ENCODE measurements at regions of chr6 and their contacts with region 1.

Region 1: DNA sequence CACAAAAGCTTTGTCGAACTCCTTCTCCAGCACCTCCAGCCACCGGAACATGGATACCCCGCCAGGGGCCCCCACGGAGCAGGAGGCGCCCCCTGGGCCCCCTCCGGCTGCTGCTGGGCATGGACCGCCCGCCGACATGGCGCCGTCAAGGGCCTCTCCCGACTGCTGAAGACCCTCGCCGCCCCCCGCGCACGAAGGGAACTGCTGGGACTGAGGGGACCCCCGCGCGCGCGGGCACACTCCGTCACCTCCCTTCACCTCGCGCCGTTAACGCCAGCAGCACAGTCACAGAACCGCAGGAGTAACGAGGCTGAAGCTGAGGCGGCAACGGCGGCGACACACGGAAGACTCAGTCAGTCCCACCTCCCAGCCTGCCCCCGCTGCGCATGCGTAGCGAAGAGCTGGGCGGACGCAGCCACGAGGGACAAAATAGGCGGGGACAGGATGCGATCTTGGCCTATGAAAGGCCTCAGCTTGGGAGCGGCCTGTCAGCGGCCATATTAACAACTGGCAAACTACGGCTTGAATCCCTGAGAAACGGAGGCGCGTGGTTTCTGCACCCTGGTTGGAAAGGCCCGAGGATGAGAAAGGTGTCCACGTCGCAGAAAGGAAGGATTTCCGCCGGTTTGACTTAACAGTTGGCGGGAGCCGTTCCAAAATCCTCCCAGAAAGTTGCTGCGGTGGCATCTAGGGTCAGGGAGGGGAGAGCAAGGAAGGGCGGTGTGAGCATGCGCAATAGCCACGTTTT is at the start of gene GOPC:
- DNase-seq: peak; percentile 98
- H3K4me3 Mint-ChIP-seq: peak within 1 kb of the TSS; percentile 99
- H3K27ac Mint-ChIP-seq: peak within 1 kb of the TSS; percentile 100
- H3K4me1 Mint-ChIP-seq: peaks cover 31% of the 10 kb centered on the region
- H3K27me3 Mint-ChIP-seq: peaks cover 3% of the 10 kb centered on the region
- total RNA-seq, gene GOPC: 22.2 TPM in 2 replicates

Region 2: DNA sequence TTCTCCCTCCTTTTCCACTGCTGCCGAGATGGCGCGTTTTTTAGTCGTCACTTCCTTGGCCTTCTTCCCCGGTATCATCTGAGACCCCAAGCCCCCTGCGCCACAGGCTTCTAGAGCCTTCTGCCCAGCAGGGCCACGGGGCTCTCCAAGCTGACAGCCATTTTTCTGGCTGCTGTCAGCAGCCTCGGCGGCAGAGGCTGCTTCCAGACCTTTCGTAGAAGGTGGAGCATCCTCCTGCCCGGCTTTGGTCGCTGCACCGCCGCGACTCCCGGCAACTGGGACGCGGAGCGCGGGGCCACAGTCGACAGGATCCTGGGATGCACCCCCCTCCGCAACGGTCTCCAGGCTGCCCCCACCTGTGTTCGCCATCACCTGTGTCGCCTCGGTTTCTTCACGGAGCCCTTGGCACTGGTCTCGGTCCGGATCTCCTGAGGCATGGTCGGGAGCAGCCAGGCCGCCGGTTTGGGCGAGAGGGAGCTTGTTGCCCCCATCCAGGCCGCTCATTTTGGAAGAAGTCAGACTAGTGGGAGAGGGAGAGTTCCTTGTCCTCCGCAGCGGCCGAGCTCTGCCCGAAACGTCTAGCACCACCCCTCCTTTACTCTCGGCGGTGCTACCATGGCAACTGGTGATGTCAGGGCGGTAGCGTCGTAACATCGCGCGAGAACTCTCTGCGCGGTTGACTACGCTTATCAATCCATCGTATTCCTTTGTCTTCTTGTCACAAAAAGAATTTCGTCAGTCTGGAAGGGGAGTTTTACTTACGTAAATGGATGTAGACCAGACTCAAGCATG is 1348.6 kb before region 1 on chr6 and contains the start of gene TSPYL4:
- intact Hi-C with region 1: loop called (anchors 10 kb)
- DNase-seq: peak; percentile 98
- H3K4me3 Mint-ChIP-seq: no peak within 1 kb of the TSS
- H3K27ac Mint-ChIP-seq: no peak within 1 kb of the TSS
- H3K4me1 Mint-ChIP-seq: peaks cover 25% of the 10 kb centered on the region
- H3K27me3 Mint-ChIP-seq: no peaks in the 10 kb centered on the region
- total RNA-seq, gene TSPYL4: 22.1 and 22.2 TPM in 2 replicates

Region 3: DNA sequence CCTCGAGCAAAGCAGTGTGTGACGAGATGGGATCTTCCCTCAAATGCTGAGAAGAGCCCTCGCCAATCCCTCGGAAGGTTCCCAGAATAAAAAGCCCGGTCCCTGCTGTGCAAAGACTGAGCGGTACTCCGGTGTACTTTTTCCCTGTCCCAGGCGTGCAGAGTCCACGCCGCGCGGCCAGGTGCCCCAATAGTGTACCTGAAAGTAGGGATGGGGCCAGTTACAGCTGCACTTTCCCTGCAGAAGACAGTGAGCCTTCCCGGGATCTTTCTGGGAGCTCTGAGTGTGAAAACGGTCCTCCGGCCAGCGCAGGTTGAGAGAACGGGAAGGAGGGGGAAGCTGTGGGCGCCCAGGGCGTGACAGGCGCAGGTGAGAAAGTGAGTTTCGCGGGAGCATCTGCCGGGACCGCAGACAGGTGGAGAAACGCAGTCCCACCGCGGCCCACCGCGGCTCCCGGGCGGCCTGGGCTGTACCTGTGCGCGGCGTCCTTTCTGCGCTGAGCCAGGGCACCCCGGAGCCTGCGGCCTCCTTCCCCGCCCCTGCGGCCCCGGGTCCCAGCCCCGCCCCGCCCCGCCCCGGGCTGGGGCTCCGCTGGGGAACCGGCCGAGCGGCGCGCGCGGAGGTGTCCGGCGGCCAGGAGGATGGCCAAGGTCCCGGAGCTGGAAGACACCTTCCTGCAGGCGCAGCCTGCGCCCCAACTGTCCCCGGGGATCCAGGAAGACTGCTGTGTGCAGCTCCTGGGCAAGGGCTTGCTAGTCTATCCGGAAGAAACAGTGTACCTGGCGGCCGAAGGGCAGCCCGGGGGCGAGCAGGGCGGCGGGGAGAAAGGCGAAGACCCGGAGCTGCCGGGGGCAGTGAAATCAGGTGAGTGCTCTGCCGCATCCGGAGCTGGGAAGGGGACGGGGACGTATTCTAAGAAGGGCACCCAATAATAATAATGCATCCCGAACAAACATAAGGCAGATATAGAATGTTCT is 725.4 kb before region 1 on chr6 and contains the start of gene RFX6:
- intact Hi-C with region 1: no loop called
- DNase-seq: no peak
- H3K4me3 Mint-ChIP-seq: peak within 1 kb of the TSS; percentile 69
- H3K27ac Mint-ChIP-seq: no peak within 1 kb of the TSS
- H3K4me1 Mint-ChIP-seq: peaks cover 2% of the 10 kb centered on the region
- H3K27me3 Mint-ChIP-seq: peaks cover 34% of the 10 kb centered on the region
- total RNA-seq, gene RFX6: not detected in 2 replicates

Region 4: GRCh38 chr6:116971959-116972358 is 630.4 kb before region 1 on chr6:
- intact Hi-C with region 1: loop called (anchors 2 kb)
- DNase-seq: peak; percentile 65
- H3K4me3 Mint-ChIP-seq: no peak overlapping the region
- H3K27ac Mint-ChIP-seq: no peak overlapping the region
- H3K4me1 Mint-ChIP-seq: no peaks in the 10 kb centered on the region
- H3K27me3 Mint-ChIP-seq: peaks cover 4% of the 10 kb centered on the region

Region 5: DNA sequence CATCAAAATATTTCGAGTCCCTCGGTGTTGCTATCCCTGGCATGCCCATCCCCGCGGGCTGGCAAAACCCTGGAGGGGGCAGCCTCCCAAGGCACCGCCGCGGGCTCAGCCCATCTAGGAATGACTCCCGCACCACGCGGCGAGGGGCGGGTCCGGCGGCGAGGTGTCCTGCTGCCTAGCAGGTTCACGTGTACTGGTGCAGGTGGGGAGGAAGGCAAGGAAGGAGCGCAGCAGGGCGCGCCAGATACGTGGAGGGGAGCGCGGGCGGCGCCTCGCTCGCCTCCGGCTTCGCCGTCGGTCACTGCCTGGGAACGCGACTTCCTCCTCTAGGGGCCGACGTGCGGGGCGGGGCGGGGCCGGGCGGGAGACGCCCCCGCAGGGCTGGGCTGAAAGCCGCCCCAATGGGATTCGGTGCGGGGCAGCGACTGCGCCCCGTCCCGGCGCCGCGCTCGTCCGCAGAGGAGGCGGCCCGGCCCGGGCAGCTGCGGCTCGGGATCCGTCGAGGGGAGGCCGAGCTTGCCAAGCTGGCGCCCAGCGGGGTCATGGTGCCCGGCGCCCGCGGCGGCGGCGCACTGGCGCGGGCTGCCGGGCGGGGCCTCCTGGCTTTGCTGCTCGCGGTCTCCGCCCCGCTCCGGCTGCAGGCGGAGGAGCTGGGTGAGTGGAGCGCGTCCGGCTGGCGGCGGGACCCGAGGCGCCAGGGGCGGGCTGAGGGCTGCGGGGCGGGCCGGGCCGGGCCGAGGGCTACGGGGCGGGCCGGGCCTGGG is 119.9 kb before region 1 on chr6 and contains the start of gene DCBLD1:
- intact Hi-C with region 1: loop called (anchors 1 kb)
- DNase-seq: peak; percentile 90
- H3K4me3 Mint-ChIP-seq: peak within 1 kb of the TSS; percentile 95
- H3K27ac Mint-ChIP-seq: peak within 1 kb of the TSS; percentile 86
- H3K4me1 Mint-ChIP-seq: peaks cover 16% of the 10 kb centered on the region
- H3K27me3 Mint-ChIP-seq: peaks cover 61% of the 10 kb centered on the region
- total RNA-seq, gene DCBLD1: 3.7 and 4.8 TPM in 2 replicates

Region 6: GRCh38 chr6:117498159-117498558 is 104.2 kb before region 1 on chr6:
- intact Hi-C with region 1: no loop called
- DNase-seq: no peak
- H3K4me3 Mint-ChIP-seq: no peak overlapping the region
- H3K27ac Mint-ChIP-seq: no peak overlapping the region
- H3K4me1 Mint-ChIP-seq: peaks cover 19% of the 10 kb centered on the region
- H3K27me3 Mint-ChIP-seq: peaks cover 1% of the 10 kb centered on the region

Region 7: DNA sequence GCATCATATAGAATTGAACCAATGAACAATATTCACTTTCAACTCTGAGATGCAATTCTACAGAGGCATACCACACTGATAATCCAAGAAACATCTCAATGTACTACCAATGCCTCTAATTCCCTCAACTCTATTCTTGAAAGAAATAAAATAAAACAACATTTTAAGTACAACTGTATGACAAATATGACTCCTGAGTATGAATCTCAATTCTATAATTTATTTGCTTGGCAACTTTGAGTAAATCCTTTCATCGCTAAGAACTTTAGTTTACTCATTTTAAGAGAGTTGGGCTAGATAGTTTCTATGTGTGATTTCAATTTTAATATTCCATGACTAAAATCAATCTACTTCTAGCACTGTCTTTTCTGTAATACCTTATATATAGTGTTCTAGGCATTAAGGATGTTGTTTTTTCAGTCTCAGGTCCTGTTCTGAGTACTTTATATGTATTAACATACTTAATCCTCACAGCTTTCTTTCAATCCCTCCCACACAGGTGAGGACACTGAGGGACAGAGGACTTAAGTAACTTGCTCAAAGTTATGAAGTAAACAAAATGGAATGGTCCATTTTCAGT is 33.4 kb before region 1 on chr6:
- intact Hi-C with region 1: loop called (anchors 1 kb)
- DNase-seq: no peak
- H3K4me3 Mint-ChIP-seq: no peak overlapping the region
- H3K27ac Mint-ChIP-seq: no peak overlapping the region
- H3K4me1 Mint-ChIP-seq: peaks cover 7% of the 10 kb centered on the region
- H3K27me3 Mint-ChIP-seq: no peaks in the 10 kb centered on the region

Region 8: DNA sequence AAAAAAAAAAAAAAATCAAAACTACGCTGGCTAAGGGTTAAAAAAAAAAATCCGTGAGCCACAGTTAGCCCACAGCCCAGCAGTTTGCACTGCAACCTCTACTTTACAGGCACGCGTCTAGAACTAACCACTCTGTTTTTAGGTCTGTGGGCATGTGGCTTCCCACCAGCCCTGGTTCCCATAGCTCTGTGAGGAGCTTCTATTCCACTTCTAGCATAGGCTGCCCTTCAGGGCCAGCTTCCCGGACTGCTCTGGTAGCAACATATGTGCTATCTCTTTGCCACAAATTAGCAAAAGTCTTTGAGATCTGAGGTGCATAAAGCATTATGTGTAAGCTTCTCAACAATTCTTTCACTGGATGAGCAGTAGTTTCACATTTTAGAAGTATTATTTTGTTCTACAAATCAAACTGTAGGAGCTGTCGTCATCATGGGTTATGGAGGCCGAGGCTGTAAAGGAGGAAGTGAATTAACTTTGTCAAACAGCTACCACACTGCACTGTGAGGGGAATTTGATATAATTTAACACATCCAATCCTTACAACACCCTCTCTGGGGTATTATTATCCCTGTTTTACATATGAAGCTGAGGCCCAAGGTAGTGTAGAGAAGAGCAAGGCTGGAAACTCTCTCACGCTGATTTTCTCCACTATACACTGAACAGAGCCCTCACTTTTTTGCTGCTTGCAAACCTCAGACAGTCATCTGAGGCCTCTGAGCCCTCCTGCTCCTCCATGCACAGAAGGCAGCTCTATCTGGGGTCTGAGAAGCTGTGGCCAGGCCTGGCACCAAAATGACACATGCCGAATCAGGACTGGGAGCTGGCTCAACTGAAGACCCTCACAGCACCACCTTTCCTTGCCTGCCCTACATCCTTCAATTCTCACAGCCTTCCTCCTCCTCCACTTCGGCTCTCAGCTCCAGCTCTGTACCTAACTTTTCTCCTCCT is 1711.9 kb after region 1 on chr6:
- intact Hi-C with region 1: loop called (anchors 5 kb)
- DNase-seq: peak; percentile 83
- H3K4me3 Mint-ChIP-seq: peak overlapping the region; percentile 81
- H3K27ac Mint-ChIP-seq: peak overlapping the region; percentile 98
- H3K4me1 Mint-ChIP-seq: peaks cover 71% of the 10 kb centered on the region
- H3K27me3 Mint-ChIP-seq: no peaks in the 10 kb centered on the region

Measured in activated CD4-positive, alpha-beta T cell treated with anti-CD3 and anti-CD28 coated beads, Interleukin-2, amount 10 ng/mL, durations not matched to agents 24 days and 14 days (primary cell).